ENCODE measurements at regions of chr7 and their contacts with region 1.

Region 1: DNA sequence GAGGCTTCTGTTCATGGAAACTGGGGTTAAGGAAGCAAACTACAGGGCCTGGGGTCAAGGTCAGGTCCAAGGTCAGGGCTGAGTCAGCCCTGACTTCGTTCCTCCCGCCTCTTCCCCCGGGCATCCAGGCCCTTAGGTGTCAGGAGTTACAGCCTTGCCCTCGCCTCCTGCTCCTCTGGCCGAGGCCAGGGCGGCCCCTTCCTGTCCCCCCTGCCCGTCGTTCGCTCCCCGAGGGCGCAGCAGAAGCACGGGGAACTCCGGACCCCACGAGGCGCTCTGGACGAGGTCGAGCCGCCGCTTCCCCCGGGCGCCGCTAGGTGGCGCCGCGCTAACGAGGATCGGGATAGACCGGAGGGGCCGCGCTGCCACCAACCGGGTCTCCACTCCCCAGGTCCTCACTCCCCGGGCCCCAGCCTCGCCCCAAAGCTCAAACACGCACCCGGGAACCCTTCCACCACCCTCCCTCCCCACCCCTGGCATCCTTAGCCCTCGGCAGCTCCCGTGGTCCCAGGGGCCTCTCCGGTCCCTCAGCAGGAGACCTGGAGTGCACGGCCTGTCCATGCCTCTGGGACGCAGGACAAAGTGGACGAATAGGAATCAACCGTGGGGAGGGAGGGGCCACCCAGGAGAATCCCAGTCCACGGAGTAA is 59.2 kb upstream of the MYL10 start:
- DNase-seq: peak; percentile 47 to 89 (median 75)
- ATAC-seq: peak; percentile 90
- H3K4me3 ChIP-seq: no peak overlapping the region
- H3K4me3 Mint-ChIP-seq: peak overlapping the region in 1 of 10 donors; percentile 47
- H3K27ac ChIP-seq: no peak overlapping the region
- H3K27ac Mint-ChIP-seq: no peak overlapping the region
- H3K4me1 ChIP-seq: no peaks in the 10 kb centered on the region
- H3K4me1 Mint-ChIP-seq: peaks cover 0 to 10% (median 0%) of the 10 kb centered on the region in 7 donors
- H3K27me3 ChIP-seq: no peaks in the 10 kb centered on the region
- H3K27me3 Mint-ChIP-seq: no peaks in the 10 kb centered on the region

Region 2: DNA sequence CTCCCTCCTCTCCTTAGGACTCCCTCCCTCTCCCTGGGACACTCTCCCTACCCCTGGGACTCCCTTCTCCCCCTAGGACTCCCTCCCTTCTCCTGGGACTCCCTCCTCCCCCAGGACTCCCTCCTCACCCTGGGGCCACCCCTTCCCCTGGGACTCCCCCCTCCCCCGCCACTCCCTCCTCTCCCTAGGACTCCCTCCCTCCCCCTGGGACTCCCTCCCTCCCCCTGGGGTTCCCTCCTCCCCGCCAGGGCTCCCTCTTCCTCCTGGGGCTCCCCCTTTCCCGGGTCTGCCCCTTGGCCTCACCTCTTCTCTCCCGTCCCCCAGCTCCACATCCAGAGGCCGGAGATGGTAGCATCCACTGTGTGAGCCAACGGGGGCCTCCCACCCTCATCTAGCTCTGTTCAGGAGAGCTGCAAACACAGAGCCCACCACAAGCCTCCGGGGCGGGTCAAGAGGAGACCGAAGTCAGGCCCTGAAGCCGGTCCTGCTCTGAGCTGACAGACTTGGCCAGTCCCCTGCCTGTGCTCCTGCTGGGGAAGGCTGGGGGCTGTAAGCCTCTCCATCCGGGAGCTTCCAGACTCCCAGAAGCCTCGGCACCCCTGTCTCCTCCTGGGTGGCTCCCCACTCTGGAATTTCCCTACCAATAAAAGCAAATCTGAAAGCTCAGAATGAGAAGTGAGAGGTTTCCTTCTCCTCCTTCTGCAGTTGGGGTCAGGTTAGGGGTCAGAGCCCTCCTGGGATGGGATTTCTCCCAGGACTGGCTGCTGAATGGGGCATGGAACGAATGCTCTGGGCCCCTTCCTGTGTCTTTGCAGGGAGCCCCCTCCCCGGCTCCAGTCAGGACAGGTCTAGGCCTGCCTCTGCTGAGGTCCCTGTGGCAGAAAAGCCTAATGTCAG is 669.8 kb before region 1 on chr7:
- CTCF ChIA-PET with region 1: no interaction called
- POLR2A ChIA-PET with region 1: no interaction called
- intact Hi-C with region 1: no loop called
- DNase-seq: peak in 1 of 9 donors; percentile 27
- ATAC-seq: no peak
- H3K4me3 ChIP-seq: no peak overlapping the region
- H3K4me3 Mint-ChIP-seq: peak overlapping the region in 3 of 10 donors; percentile 25 to 53 (median 35)
- H3K27ac ChIP-seq: no peak overlapping the region
- H3K27ac Mint-ChIP-seq: peak overlapping the region in 3 of 9 donors; percentile 41 to 84 (median 68)
- H3K4me1 ChIP-seq: peaks cover 4 to 12% of the 10 kb centered on the region in 2 donors
- H3K4me1 Mint-ChIP-seq: peaks cover 0 to 26% (median 12%) of the 10 kb centered on the region in 7 donors
- H3K27me3 ChIP-seq: no peaks in the 10 kb centered on the region
- H3K27me3 Mint-ChIP-seq: peaks cover 5 to 25% (median 12%) of the 10 kb centered on the region in 5 donors

Region 3: GRCh38 chr7:101542527-101543241 is 145.6 kb before region 1 on chr7:
- CTCF ChIA-PET with region 1: no interaction called
- POLR2A ChIA-PET with region 1: no interaction called
- intact Hi-C with region 1: loop called in 1 of 2 experiments (anchors 1 kb)
- DNase-seq: peak; percentile 36 to 77 (median 61)
- ATAC-seq: peak; percentile 71
- H3K4me3 ChIP-seq: no peak overlapping the region
- H3K4me3 Mint-ChIP-seq: no peak overlapping the region
- H3K27ac ChIP-seq: no peak overlapping the region
- H3K27ac Mint-ChIP-seq: no peak overlapping the region
- H3K4me1 ChIP-seq: no peaks in the 10 kb centered on the region
- H3K4me1 Mint-ChIP-seq: peaks cover 0 to 5% (median 0%) of the 10 kb centered on the region in 7 donors
- H3K27me3 ChIP-seq: no peaks in the 10 kb centered on the region
- H3K27me3 Mint-ChIP-seq: peaks cover 0 to 5% (median 0%) of the 10 kb centered on the region in 5 donors

Region 4: DNA sequence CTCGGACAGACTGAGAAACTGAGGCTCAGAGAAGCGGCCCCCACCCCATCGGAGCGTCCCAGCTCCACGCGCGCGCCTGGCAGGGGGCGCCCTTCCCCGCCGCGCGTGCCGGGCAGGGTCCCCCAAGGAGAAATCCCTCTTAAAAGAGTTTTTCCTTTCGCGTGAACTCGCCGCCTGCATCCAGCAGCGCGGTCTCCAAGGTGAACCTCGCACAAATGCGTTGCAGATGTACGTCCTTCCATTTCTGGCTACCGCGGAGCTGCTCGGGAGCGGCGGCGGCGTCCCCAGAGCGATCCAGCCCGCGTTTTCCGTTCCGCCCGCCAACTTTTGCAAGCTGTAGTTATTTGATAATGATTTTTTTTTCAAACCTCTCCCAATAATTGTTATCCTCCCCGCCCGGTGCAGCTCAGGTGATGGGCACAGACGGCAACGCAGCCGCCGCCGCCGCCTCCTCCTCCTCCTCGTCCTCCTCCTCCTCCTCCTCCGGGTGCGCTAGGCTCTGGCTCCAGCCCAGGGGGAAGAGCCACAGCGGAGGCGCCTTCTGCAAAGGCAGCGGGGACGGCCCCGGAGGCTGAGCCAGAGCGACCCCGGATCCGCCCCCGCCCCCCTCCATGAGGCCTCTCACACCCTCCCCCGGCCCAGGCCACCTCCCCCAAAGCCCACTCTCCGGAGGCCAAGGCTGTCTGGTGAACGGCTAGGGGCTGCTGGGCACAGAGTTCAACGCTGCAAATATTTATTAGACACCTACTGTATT is 55.1 kb after region 1 on chr7:
- CTCF ChIA-PET with region 1: no interaction called
- POLR2A ChIA-PET with region 1: no interaction called
- intact Hi-C with region 1: loop called (anchors 1 to 5 kb)
- DNase-seq: peak; percentile 48 to 77 (median 68)
- ATAC-seq: peak; percentile 82
- H3K4me3 ChIP-seq: peak overlapping the region; percentile 59
- H3K4me3 Mint-ChIP-seq: peak overlapping the region; percentile 76 to 91 (median 84)
- H3K27ac ChIP-seq: no peak overlapping the region
- H3K27ac Mint-ChIP-seq: peak overlapping the region in 2 of 9 donors; percentile 28 to 73
- H3K4me1 ChIP-seq: peaks cover 0 to 17% of the 10 kb centered on the region in 2 donors
- H3K4me1 Mint-ChIP-seq: peaks cover 7 to 48% (median 22%) of the 10 kb centered on the region in 7 donors
- H3K27me3 ChIP-seq: no peaks in the 10 kb centered on the region
- H3K27me3 Mint-ChIP-seq: no peaks in the 10 kb centered on the region

Region 5: GRCh38 chr7:101856473-101857357 is 168.4 kb after region 1 on chr7:
- CTCF ChIA-PET with region 1: no interaction called
- POLR2A ChIA-PET with region 1: no interaction called
- intact Hi-C with region 1: loop called in 1 of 2 experiments (anchors 1 kb)
- DNase-seq: peak; percentile 61 to 79 (median 75)
- ATAC-seq: peak; percentile 94
- H3K4me3 ChIP-seq: peak overlapping the region; percentile 76
- H3K4me3 Mint-ChIP-seq: peak overlapping the region; percentile 92 to 100 (median 98)
- H3K27ac ChIP-seq: peak overlapping the region; percentile 75
- H3K27ac Mint-ChIP-seq: peak overlapping the region; percentile 93 to 97 (median 96)
- H3K4me1 ChIP-seq: peaks cover 9 to 14% of the 10 kb centered on the region in 2 donors
- H3K4me1 Mint-ChIP-seq: peaks cover 38 to 68% (median 53%) of the 10 kb centered on the region in 7 donors
- H3K27me3 ChIP-seq: no peaks in the 10 kb centered on the region
- H3K27me3 Mint-ChIP-seq: peaks cover 0 to 3% (median 0%) of the 10 kb centered on the region in 5 donors

Region 6: DNA sequence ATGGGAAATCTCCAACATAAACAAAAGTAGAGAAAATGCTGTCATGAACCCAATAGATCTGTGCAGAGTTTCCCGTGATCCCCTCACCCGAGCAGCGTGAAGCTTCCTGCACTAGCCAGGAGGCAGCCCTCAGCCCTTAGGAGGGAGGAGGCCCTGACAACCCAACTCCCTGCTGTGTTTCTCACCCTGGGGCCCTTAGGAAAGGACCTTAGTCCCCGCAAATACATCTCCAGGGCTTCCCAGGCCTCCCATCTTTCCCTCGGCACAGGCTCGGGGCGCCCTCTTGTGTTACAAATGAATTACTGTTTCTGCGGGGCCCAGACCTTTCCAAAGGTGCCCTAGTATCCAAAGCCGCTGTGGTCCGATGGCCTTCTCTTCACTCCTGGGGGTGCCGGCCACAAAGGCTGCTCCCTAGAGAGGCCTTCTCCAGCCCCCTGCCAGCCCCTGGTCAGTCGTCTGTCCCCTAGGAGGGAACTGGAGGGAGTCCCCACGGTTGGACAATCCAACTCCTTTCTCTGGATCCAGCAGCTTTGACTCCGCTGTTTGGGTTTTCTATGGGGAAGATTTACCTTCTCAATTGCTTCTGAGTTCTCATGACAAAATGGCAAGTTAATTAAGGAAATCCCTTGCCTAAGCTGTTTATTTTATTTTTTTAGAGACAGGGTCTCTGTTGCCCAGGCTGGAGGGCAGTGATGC is 548.4 kb after region 1 on chr7:
- CTCF ChIA-PET with region 1: no interaction called
- POLR2A ChIA-PET with region 1: no interaction called
- intact Hi-C with region 1: loop called (anchors 1 kb)
- DNase-seq: peak in 8 of 9 donors; percentile 5 to 57 (median 32)
- ATAC-seq: peak; percentile 61
- H3K4me3 ChIP-seq: no peak overlapping the region
- H3K4me3 Mint-ChIP-seq: no peak overlapping the region
- H3K27ac ChIP-seq: no peak overlapping the region
- H3K27ac Mint-ChIP-seq: no peak overlapping the region
- H3K4me1 ChIP-seq: no peaks in the 10 kb centered on the region
- H3K4me1 Mint-ChIP-seq: peaks cover 0 to 4% (median 0%) of the 10 kb centered on the region in 7 donors
- H3K27me3 ChIP-seq: no peaks in the 10 kb centered on the region
- H3K27me3 Mint-ChIP-seq: no peaks in the 10 kb centered on the region

Region 7: GRCh38 chr7:102272075-102272917 is 584.0 kb after region 1 on chr7:
- CTCF ChIA-PET with region 1: interaction called, 3 read pairs
- POLR2A ChIA-PET with region 1: no interaction called
- intact Hi-C with region 1: loop called (anchors 1 kb)
- DNase-seq: peak; percentile 34 to 78 (median 69)
- ATAC-seq: peak; percentile 83
- H3K4me3 ChIP-seq: no peak overlapping the region
- H3K4me3 Mint-ChIP-seq: no peak overlapping the region
- H3K27ac ChIP-seq: no peak overlapping the region
- H3K27ac Mint-ChIP-seq: no peak overlapping the region
- H3K4me1 ChIP-seq: no peaks in the 10 kb centered on the region
- H3K4me1 Mint-ChIP-seq: peaks cover 0 to 4% (median 0%) of the 10 kb centered on the region in 7 donors
- H3K27me3 ChIP-seq: no peaks in the 10 kb centered on the region
- H3K27me3 Mint-ChIP-seq: no peaks in the 10 kb centered on the region